ENCODE measurements at regions of chr19 and their contacts with region 1.

Region 1: GRCh38 chr19:40750059-40750873 is at the start of gene ACTMAP:
- DNase-seq: peak; percentile 98 to 99
- H3K4me3 ChIP-seq: peak within 1 kb of the TSS; percentile 95
- H3K27ac ChIP-seq: peak within 1 kb of the TSS; percentile 91
- H3K4me1 ChIP-seq: peaks cover 44% of the 10 kb centered on the region
- H3K27me3 ChIP-seq: no peaks in the 10 kb centered on the region
- CTCF ChIP-seq: no peak
- total RNA-seq, gene ACTMAP: 35.9 and 39.3 TPM in 2 replicates

Region 2: DNA sequence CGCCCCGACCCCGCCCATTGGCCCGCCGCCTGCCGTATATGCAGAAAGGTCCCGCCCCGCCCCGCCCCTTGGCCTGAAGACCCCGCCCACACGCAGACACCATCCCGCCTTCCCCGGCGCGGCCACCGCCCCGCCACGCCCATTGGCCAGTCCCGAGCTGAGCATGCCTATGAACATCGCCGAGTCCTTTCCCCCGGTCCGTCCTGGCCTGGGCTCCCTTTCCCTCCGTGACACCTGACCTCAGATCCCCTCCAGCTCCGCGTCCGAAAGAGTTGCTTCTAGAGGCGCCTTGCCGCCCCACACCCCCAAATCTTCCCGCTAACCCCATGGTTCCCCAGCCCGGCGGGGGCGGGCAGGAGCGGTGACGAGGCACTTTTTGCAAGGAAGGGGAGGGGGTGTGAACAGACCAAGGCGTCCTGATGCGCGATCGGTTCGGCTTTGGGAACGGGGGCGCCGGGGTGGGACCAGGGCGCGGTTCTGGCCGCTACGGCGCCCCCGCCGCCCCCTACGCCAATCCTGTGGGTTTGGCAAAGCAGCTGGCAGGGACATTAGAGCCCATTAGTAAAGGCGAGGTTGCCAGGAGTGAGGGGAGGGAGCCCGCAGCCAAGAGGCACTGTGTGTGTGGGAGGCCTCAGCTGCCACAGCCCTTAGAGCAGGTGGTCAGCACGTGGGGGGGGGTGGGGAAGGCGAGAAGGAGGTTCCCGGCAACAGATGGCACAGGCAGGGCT is 59.4 kb before region 1 on chr19:
- CTCF ChIA-PET with region 1: no interaction called
- POLR2A ChIA-PET with region 1: interaction called, 3 read pairs
- intact Hi-C with region 1: loop called (anchors 2 kb)
- DNase-seq: peak; percentile 77 to 90
- H3K4me3 ChIP-seq: peak overlapping the region; percentile 75
- H3K27ac ChIP-seq: peak overlapping the region; percentile 81
- H3K4me1 ChIP-seq: peaks cover 19% of the 10 kb centered on the region
- H3K27me3 ChIP-seq: no peaks in the 10 kb centered on the region
- CTCF ChIP-seq: no peak

Region 3: GRCh38 chr19:40735003-40735771 is 15.1 kb before region 1 on chr19:
- CTCF ChIA-PET with region 1: interaction called, 3 read pairs
- POLR2A ChIA-PET with region 1: interaction called, 10 read pairs
- intact Hi-C with region 1: loop called (anchors 1 kb)
- DNase-seq: peak in 1 of 2 experiments; percentile 37
- H3K4me3 ChIP-seq: no peak overlapping the region
- H3K27ac ChIP-seq: peak overlapping the region; percentile 65
- H3K4me1 ChIP-seq: peaks cover 15% of the 10 kb centered on the region
- H3K27me3 ChIP-seq: no peaks in the 10 kb centered on the region
- CTCF ChIP-seq: no peak

Region 4: GRCh38 chr19:40798223-40798996 is 48.1 kb after region 1 on chr19:
- CTCF ChIA-PET with region 1: no interaction called
- POLR2A ChIA-PET with region 1: interaction called, 6 read pairs
- intact Hi-C with region 1: loop called (anchors 2 kb)
- DNase-seq: peak; percentile 95 to 100
- H3K4me3 ChIP-seq: peak overlapping the region; percentile 52
- H3K27ac ChIP-seq: peak overlapping the region; percentile 11; the same call in 1 of the 2 replicates
- H3K4me1 ChIP-seq: peaks cover 28% of the 10 kb centered on the region
- H3K27me3 ChIP-seq: no peaks in the 10 kb centered on the region
- CTCF ChIP-seq: peak; percentile 60; the same call in 1 of the 2 replicates

Region 5: DNA sequence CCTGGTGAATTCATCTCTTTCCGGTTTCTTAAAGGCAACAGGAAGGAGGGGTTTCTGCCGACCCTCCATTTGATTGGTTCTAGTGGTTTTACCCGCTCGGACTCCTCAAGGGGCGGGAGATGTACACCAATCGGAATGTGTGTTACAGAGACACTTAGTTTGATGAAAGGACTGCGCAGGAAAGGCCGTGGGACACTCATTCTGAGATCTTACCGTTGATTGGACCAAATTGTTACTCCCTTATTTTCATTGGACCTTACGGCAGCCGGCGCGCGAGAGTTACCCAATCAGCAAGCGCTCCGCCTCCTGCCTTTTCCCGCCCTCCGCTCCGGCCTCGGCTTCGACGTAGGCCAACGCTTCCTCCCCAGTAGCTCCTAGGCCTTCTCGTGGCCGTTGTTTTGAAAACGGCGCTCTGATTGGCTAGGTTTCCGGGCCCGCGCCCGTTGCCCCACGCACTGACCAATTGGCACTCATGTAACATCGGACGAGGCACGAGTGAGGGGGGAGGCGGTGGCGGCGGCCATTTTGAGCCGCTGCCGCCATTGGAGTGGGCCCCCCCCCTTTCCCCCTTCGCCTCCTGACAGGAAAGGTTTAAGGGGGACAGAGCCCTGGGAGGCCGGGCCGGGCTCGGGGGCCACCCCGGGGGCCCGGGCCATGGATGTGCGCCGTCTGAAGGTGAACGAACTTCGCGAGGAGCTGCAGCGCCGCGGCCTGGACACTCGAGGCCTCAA is 513.7 kb after region 1 on chr19 and contains the start of gene HNRNPUL1:
- CTCF ChIA-PET with region 1: no interaction called
- POLR2A ChIA-PET with region 1: no interaction called
- intact Hi-C with region 1: loop called (anchors 1 kb)
- DNase-seq: peak; percentile 99 to 100
- H3K4me3 ChIP-seq: peak within 1 kb of the TSS; percentile 85
- H3K27ac ChIP-seq: peak within 1 kb of the TSS; percentile 90
- H3K4me1 ChIP-seq: peaks cover 10% of the 10 kb centered on the region; the same call in 1 of the 2 replicates
- H3K27me3 ChIP-seq: no peaks in the 10 kb centered on the region
- CTCF ChIP-seq: no peak
- total RNA-seq, gene HNRNPUL1: 248 and 266 TPM in 2 replicates

Region 6: DNA sequence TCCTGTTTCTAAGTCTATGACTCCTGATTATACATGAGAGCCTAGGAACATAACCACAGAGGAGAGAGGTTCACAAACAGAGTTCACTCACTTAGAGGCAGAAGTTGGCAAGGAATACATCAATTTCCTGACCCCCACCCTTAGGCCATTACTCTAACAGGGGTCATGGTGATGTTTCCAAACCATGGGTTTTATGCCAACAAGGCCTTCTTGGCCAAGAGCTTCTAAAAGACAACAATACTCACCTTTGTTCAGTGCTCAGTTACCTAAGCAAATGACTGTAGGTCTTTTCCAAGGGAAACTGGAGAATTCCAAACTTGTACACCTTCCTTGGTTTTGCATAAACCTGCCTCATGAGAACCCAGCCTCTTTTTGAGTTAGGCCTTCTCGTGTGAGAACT is 745.3 kb after region 1 on chr19:
- CTCF ChIA-PET with region 1: no interaction called
- POLR2A ChIA-PET with region 1: no interaction called
- intact Hi-C with region 1: no loop called
- DNase-seq: no peak
- H3K4me3 ChIP-seq: no peak overlapping the region
- H3K27ac ChIP-seq: no peak overlapping the region
- H3K4me1 ChIP-seq: no peaks in the 10 kb centered on the region
- H3K27me3 ChIP-seq: peaks cover 49% of the 10 kb centered on the region
- CTCF ChIP-seq: no peak

Region 7: GRCh38 chr19:41920882-41921576 is 1170.8 kb after region 1 on chr19:
- CTCF ChIA-PET with region 1: no interaction called
- POLR2A ChIA-PET with region 1: no interaction called
- intact Hi-C with region 1: no loop called
- DNase-seq: no peak
- H3K4me3 ChIP-seq: no peak overlapping the region
- H3K27ac ChIP-seq: no peak overlapping the region
- H3K4me1 ChIP-seq: no peaks in the 10 kb centered on the region
- H3K27me3 ChIP-seq: peaks cover 54% of the 10 kb centered on the region
- CTCF ChIP-seq: no peak